A549 (cell line): ENCODE measurements at regions of chr6 and their contacts with region 1.

Region 1: GRCh38 chr6:33585403-33586107 is 5.5 kb upstream of the BAK1 start:
- DNase-seq: peak; percentile 64 to 70
- ATAC-seq: peak; percentile 54 to 75
- H3K4me3 ChIP-seq: no peak overlapping the region
- H3K27ac ChIP-seq: peak overlapping the region; percentile 60 to 78; a peak in 5 of 6 replicates
- H3K4me1 ChIP-seq: peaks cover 25% of the 10 kb centered on the region
- CTCF ChIP-seq: peak; percentile 78
- EP300 ChIP-seq: no peak
- POLR2A ChIP-seq: no peak
- RAD21 ChIP-seq: peak; percentile 87 to 88

Region 2: GRCh38 chr6:33613795-33614168 is 28.2 kb after region 1 on chr6:
- CTCF ChIA-PET with region 1: interaction called, 13 read pairs
- POLR2A ChIA-PET with region 1: no interaction called
- DNase-seq: no peak
- ATAC-seq: peak; percentile 33; a peak in 4 of 6 replicates
- H3K4me3 ChIP-seq: no peak overlapping the region
- H3K27ac ChIP-seq: peak overlapping the region; percentile 42 to 65; a peak in 4 of 6 replicates
- H3K4me1 ChIP-seq: peaks cover 50% of the 10 kb centered on the region
- CTCF ChIP-seq: no peak
- EP300 ChIP-seq: no peak
- POLR2A ChIP-seq: no peak
- RAD21 ChIP-seq: no peak

Region 3: GRCh38 chr6:33628401-33628964 is 42.9 kb after region 1 on chr6:
- CTCF ChIA-PET with region 1: interaction called, 18 read pairs
- POLR2A ChIA-PET with region 1: no interaction called
- DNase-seq: no peak
- ATAC-seq: no peak
- H3K4me3 ChIP-seq: no peak overlapping the region
- H3K27ac ChIP-seq: peak overlapping the region in 1 of 2 experiments; percentile 50; a peak in 1 of 6 replicates
- H3K4me1 ChIP-seq: peaks cover 29% of the 10 kb centered on the region
- CTCF ChIP-seq: no peak
- EP300 ChIP-seq: no peak
- POLR2A ChIP-seq: no peak
- RAD21 ChIP-seq: no peak

Region 4: GRCh38 chr6:33672808-33673207 is 87.3 kb after region 1 on chr6:
- CTCF ChIA-PET with region 1: interaction called, 87 read pairs
- POLR2A ChIA-PET with region 1: interaction called, 5 read pairs
- DNase-seq: peak; percentile 78 to 85
- ATAC-seq: peak; percentile 85 to 90
- H3K4me3 ChIP-seq: no peak overlapping the region
- H3K27ac ChIP-seq: peak overlapping the region; percentile 73 to 92
- H3K4me1 ChIP-seq: peaks cover 78% of the 10 kb centered on the region
- CTCF ChIP-seq: peak; percentile 38; the same call in 2 of the 3 replicates
- EP300 ChIP-seq: no peak
- POLR2A ChIP-seq: no peak
- RAD21 ChIP-seq: peak; percentile 49 to 60

Region 5: GRCh38 chr6:33711140-33712129 is 125.9 kb after region 1 on chr6 and contains the start of gene UQCC2:
- CTCF ChIA-PET with region 1: interaction called, 177 read pairs
- POLR2A ChIA-PET with region 1: interaction called, 4 read pairs
- DNase-seq: peak; percentile 87 to 95
- ATAC-seq: peak; percentile 88 to 97
- H3K4me3 ChIP-seq: peak within 1 kb of the TSS; percentile 73
- H3K27ac ChIP-seq: peak within 1 kb of the TSS; percentile 98 to 99
- H3K4me1 ChIP-seq: peaks cover 10% of the 10 kb centered on the region; the same call in 2 of the 3 replicates
- CTCF ChIP-seq: peak; percentile 64
- EP300 ChIP-seq: no peak
- POLR2A ChIP-seq: peak; percentile 50
- RAD21 ChIP-seq: peak; percentile 70
- polyA plus RNA-seq, gene UQCC2: 65.5 and 90.8 TPM in 2 replicates